Endothelial cell of umbilical vein (primary cell): ENCODE measurements at regions of chr20 and their contacts with region 1.

Region 1: GRCh38 chr20:45362804-45363610 is at the start of gene SYS1:
- DNase-seq: peak; percentile 99
- H3K4me3 ChIP-seq: peak within 1 kb of the TSS; percentile 34 to 56 (median 52)
- H3K27ac ChIP-seq: peak within 1 kb of the TSS; percentile 83
- H3K4me1 ChIP-seq: peaks cover 35% of the 10 kb centered on the region
- H3K27me3 ChIP-seq: no peaks in the 10 kb centered on the region
- CTCF ChIP-seq: peak; percentile 77 to 88
- POLR2A ChIP-seq: peak; percentile 88
- total RNA-seq, gene SYS1: 22.3 and 27.4 TPM in 2 replicates

Region 2: GRCh38 chr20:44765652-44766347 is 597.2 kb before region 1 on chr20:
- CTCF ChIA-PET with region 1: no interaction called
- POLR2A ChIA-PET with region 1: no interaction called
- dilution Hi-C with region 1: no loop called
- intact Hi-C with region 1: no loop called
- DNase-seq: no peak
- H3K4me3 ChIP-seq: no peak overlapping the region
- H3K27ac ChIP-seq: no peak overlapping the region
- H3K4me1 ChIP-seq: no peaks in the 10 kb centered on the region
- H3K27me3 ChIP-seq: peaks cover 13 to 14% of the 10 kb centered on the region in 2 experiments
- CTCF ChIP-seq: no peak
- POLR2A ChIP-seq: no peak

Region 3: DNA sequence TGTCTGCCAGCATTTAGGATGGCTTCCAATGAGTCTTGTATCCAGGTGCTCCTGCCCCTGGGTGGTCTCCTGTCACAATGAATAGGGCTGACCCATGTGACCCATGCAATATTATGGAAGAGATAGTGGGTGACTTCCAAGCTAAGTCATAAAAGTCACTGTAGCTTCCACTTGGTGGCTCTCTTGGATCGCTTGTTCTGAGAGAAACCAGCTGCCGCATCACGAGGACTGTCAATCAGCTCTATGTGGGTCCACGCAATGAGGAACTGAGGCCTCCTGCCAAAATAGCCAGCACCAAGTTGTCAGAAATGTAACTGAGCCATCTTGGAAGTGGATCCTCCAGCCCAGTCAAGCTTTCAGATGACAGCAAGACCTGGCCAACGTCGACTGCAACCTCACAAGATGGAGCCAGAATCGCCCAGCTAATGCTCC is 40.0 kb before region 1 on chr20:
- CTCF ChIA-PET with region 1: interaction called, 31 read pairs
- POLR2A ChIA-PET with region 1: no interaction called
- dilution Hi-C with region 1: no loop called
- intact Hi-C with region 1: loop called (anchors 1 kb)
- DNase-seq: peak; percentile 41
- H3K4me3 ChIP-seq: no peak overlapping the region
- H3K27ac ChIP-seq: no peak overlapping the region
- H3K4me1 ChIP-seq: no peaks in the 10 kb centered on the region
- H3K27me3 ChIP-seq: peaks cover 2% of the 10 kb centered on the region in 2 experiments
- CTCF ChIP-seq: peak in 1 of 2 donors; percentile 15
- POLR2A ChIP-seq: no peak

Region 4: DNA sequence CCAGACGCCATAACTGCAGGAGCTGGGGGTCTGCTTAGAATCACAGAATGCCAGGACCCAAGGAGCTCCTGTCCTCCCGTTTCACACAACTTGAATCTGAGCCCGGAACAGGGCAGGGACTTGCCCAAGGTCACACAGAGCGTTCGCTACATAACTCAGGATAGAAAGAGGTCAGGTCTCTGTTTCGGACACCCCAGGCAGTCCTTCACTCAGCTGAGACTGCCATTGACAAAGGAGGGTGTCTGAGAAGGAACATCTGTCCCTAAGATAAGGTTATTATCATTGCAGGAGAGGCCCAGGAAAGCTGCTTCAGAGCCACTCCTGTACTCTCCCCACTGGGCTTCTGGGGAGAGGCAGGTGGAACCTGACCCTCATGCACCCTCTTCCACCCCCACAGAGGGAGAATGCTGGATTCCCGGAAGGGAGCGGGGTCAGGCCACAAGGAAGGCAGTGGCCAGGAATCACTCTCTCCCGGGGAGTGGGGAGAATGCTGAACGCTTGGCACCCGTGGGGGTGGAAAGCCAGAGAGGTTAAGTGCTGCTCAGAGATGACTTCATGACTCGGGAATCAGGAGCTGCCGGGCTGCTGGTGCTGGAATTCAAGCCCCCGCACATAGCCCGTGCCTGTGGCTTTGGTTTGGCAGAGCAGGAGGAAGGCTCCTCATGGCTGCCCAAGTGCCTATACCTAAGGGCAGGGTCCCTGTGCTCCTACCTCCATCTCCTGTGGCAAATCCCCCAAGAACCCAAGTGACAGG is 25.5 kb before region 1 on chr20:
- CTCF ChIA-PET with region 1: interaction called, 15 read pairs
- POLR2A ChIA-PET with region 1: interaction called, 6 read pairs
- dilution Hi-C with region 1: no loop called
- intact Hi-C with region 1: no loop called
- DNase-seq: no peak
- H3K4me3 ChIP-seq: no peak overlapping the region
- H3K27ac ChIP-seq: peak overlapping the region; percentile 12
- H3K4me1 ChIP-seq: peaks cover 27% of the 10 kb centered on the region
- H3K27me3 ChIP-seq: no peaks in the 10 kb centered on the region
- CTCF ChIP-seq: no peak
- POLR2A ChIP-seq: no peak

Region 5: DNA sequence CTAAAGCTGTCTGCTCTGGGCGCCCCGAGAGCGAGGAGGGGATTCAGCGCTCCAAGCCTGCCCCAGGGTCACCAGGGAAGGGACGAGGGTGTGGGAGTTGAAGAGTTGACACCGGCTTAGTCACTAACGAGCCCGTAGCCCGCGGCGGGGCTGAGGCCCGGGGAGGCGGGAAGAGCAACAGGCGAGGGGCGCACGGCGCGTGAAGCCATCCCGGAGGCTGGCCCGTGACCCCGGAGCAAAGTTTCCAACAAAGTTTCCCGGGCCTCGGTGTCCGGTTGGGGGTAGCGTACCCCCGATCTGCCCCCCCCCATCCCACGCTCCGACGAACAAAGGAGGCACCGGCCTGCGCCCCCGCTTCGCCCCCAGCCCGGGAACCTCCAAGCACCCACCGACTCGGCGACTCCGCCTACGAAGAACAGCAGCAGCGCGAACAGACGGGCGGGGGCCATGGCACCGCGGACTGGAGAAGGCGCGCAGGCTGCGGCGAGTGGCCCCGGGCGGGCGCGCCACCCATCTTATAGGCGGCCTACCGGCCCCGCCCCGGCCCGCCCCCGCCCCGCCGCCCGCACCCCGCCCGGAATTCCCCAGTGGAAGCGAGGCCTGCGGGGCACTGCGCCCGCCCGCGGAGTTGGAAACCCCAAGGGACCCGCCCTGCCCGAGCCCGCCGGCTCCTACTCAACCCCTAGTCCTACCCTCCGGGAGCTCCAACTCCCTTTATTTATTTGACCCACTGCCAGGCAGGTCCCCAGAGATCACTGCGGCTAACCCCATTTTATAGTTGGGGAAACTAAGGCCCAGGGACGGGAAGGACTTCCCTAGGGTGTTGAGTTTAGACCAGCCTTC is 14.8 kb before region 1 on chr20 and contains the start of gene SDC4:
- CTCF ChIA-PET with region 1: interaction called, 28 read pairs
- POLR2A ChIA-PET with region 1: interaction called, 52 read pairs
- dilution Hi-C with region 1: no loop called
- intact Hi-C with region 1: loop called (anchors 1 kb)
- DNase-seq: peak; percentile 44
- H3K4me3 ChIP-seq: peak within 1 kb of the TSS; percentile 50 to 85 (median 69)
- H3K27ac ChIP-seq: peak within 1 kb of the TSS; percentile 62
- H3K4me1 ChIP-seq: peaks cover 49% of the 10 kb centered on the region
- H3K27me3 ChIP-seq: no peaks in the 10 kb centered on the region
- CTCF ChIP-seq: no peak
- POLR2A ChIP-seq: peak; percentile 99
- total RNA-seq, gene SDC4: 28.7 and 32.0 TPM in 2 replicates

Region 6: DNA sequence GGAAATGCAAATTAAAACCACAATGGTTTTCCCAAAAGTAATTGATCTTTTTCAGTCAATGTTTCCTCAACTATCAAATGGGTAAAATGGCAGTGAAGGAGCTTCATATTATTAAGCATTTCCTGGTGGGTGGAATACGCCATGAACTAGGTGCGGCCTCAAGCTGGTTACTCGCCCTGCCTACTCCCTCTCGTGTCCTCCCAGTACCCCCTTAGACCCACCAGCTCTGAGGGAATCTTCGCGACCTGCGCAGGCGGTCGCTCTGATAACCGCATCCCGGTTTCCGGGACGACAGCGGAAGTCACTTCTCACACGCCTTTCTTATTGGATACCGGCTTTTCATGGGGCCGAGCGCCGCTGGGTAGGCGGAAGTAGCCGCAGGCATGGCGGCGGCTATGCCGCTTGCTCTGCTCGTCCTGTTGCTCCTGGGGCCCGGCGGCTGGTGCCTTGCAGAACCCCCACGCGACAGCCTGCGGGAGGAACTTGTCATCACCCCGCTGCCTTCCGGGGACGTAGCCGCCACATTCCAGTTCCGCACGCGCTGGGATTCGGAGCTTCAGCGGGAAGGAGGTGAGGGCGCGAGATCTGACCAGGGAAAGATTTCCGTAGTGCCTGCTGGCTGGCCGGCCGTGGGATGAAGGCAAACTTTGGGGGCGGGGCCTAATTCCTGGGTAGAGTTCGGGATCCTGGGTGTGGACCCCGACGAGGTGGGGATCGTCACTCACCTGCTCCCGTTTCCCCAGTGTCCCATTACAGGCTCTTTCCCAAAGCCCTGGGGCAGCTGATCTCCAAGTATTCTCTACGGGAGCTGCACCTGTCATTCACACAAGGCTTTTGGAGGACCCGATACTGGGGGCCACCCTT is 53.0 kb after region 1 on chr20 and contains the start of gene PIGT:
- CTCF ChIA-PET with region 1: interaction called, 6 read pairs
- POLR2A ChIA-PET with region 1: interaction called, 4 read pairs
- dilution Hi-C with region 1: no loop called
- intact Hi-C with region 1: loop called (anchors 1 kb)
- DNase-seq: peak; percentile 87
- H3K4me3 ChIP-seq: peak within 1 kb of the TSS; percentile 43 to 76 (median 70)
- H3K27ac ChIP-seq: peak within 1 kb of the TSS; percentile 64
- H3K4me1 ChIP-seq: peaks cover 21% of the 10 kb centered on the region
- H3K27me3 ChIP-seq: no peaks in the 10 kb centered on the region
- CTCF ChIP-seq: no peak
- POLR2A ChIP-seq: peak; percentile 93
- total RNA-seq, gene PIGT: 92.7 and 96.8 TPM in 2 replicates

Region 7: DNA sequence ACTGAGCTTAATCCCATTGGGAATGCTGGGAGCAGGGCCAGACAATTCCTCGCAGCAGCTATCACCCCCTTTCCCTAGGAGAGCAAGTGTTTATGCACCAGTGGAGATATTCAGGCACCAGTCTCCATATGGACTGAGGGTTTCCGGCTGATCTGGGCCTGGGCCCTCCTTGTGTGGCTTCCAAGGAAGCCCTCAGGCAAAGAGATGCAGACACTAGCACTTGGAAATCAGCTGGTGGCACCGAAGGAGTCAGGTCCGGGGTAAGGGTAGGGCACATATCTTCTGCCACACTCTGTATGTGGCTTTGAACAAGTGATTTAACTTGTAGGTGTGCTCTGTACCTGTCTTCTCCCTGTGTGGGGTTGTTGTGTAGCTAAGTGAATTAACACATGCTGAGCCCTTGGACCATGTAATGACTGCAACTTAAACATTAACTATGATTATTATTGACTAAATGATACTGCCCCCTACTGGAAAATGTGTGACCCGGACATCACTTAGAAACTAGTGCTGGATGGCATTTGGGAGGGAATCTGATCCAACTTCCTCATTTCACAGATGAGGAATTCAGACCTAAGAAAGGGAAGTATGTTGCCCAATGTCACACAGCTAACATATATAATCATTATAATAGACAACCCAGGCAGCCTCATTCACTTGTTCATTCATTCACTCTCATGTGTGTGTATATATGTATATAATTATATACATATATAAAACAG is 87.3 kb after region 1 on chr20:
- CTCF ChIA-PET with region 1: interaction called, 12 read pairs
- POLR2A ChIA-PET with region 1: interaction called, 4 read pairs
- dilution Hi-C with region 1: no loop called
- intact Hi-C with region 1: no loop called
- DNase-seq: peak; percentile 54
- H3K4me3 ChIP-seq: no peak overlapping the region
- H3K27ac ChIP-seq: no peak overlapping the region
- H3K4me1 ChIP-seq: no peaks in the 10 kb centered on the region
- H3K27me3 ChIP-seq: peaks cover 0 to 3% of the 10 kb centered on the region in 2 experiments
- CTCF ChIP-seq: peak; percentile 48 to 56
- POLR2A ChIP-seq: no peak